Activated CD4-positive, alpha-beta T cell treated with anti-CD3 and anti-CD28 coated beads, Interleukin-2, amount 10 ng/mL, durations not matched to agents 24 days and 14 days (primary cell): ENCODE measurements at regions of chr2 and their contacts with region 1.

Region 1: GRCh38 chr2:205680067-205680466 is 2.2 kb upstream of the NRP2 start:
- DNase-seq: peak; percentile 88
- H3K4me3 Mint-ChIP-seq: no peak overlapping the region
- H3K27ac Mint-ChIP-seq: peak overlapping the region; percentile 14
- H3K4me1 Mint-ChIP-seq: peaks cover 48% of the 10 kb centered on the region
- H3K27me3 Mint-ChIP-seq: peaks cover 35% of the 10 kb centered on the region

Region 2: GRCh38 chr2:204325468-204325867 is 1354.6 kb before region 1 on chr2:
- intact Hi-C with region 1: loop called (anchors 2 kb)
- DNase-seq: peak; percentile 90
- H3K4me3 Mint-ChIP-seq: no peak overlapping the region
- H3K27ac Mint-ChIP-seq: no peak overlapping the region
- H3K4me1 Mint-ChIP-seq: peaks cover 5% of the 10 kb centered on the region
- H3K27me3 Mint-ChIP-seq: peaks cover 6% of the 10 kb centered on the region

Region 3: GRCh38 chr2:204871231-204871953 is 808.7 kb before region 1 on chr2:
- intact Hi-C with region 1: loop called (anchors 1 kb)
- DNase-seq: peak; percentile 66
- H3K4me3 Mint-ChIP-seq: no peak overlapping the region
- H3K27ac Mint-ChIP-seq: no peak overlapping the region
- H3K4me1 Mint-ChIP-seq: peaks cover 21% of the 10 kb centered on the region
- H3K27me3 Mint-ChIP-seq: peaks cover 15% of the 10 kb centered on the region

Region 4: GRCh38 chr2:204972606-204973336 is 707.3 kb before region 1 on chr2:
- intact Hi-C with region 1: loop called (anchors 10 kb)
- DNase-seq: no peak
- H3K4me3 Mint-ChIP-seq: no peak overlapping the region
- H3K27ac Mint-ChIP-seq: peak overlapping the region; percentile 62
- H3K4me1 Mint-ChIP-seq: peaks cover 34% of the 10 kb centered on the region
- H3K27me3 Mint-ChIP-seq: no peaks in the 10 kb centered on the region

Region 5: GRCh38 chr2:205474741-205475415 is 205.2 kb before region 1 on chr2:
- intact Hi-C with region 1: loop called (anchors 10 kb)
- DNase-seq: no peak
- H3K4me3 Mint-ChIP-seq: no peak overlapping the region
- H3K27ac Mint-ChIP-seq: no peak overlapping the region
- H3K4me1 Mint-ChIP-seq: peaks cover 3% of the 10 kb centered on the region
- H3K27me3 Mint-ChIP-seq: peaks cover 43% of the 10 kb centered on the region

Region 6: DNA sequence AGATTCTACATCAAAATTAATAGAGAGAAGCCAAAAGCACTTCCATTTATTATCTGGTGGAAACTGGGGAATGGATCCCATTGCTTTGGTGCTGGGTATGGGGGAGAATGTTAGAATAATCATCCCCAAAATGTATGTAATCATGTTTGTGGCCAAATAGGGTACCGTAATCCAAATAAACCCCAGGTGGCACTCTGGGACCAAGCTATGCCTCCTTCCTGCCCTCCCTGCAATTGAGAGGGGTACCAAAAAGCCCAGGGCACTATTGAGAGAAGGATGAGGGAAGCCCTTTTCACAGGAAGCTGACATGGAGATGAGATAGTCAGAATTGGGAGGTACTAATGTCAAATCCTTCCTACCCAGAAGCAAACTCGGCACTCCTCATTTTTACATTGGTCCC is 83.5 kb before region 1 on chr2:
- intact Hi-C with region 1: loop called (anchors 1 kb)
- DNase-seq: no peak
- H3K4me3 Mint-ChIP-seq: no peak overlapping the region
- H3K27ac Mint-ChIP-seq: no peak overlapping the region
- H3K4me1 Mint-ChIP-seq: no peaks in the 10 kb centered on the region
- H3K27me3 Mint-ChIP-seq: peaks cover 15% of the 10 kb centered on the region

Region 7: DNA sequence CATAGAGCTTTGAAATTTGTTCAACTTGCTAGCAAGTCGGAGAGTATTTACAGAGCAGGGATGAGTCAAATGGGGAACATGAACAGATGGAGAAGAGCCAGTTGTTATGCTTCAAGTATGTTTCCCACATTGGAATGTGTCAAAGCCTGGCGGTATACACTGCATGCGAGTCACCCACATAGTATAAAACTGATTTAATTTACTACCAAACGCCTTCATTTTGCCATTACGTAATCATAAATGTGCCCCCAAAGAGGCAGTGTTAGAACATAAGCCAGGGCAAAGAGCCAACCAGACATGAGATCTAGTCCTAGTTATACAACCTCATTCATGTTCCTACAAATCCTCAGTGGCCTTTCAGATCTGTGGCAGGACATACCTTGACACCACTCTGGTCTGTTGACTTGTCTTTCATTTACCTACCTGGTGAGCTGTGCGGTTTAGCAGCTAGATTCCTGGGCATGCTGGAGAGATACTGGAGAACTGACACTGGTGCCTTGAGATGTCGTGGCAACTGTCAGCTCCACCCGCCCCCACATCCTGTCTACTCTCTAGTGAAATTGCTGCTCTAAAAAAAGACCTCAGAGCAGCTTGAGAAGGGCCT is 19.4 kb before region 1 on chr2:
- intact Hi-C with region 1: loop called (anchors 2 kb)
- DNase-seq: peak; percentile 84
- H3K4me3 Mint-ChIP-seq: peak overlapping the region; percentile 50
- H3K27ac Mint-ChIP-seq: peak overlapping the region; percentile 73
- H3K4me1 Mint-ChIP-seq: peaks cover 28% of the 10 kb centered on the region
- H3K27me3 Mint-ChIP-seq: peaks cover 4% of the 10 kb centered on the region

Region 8: GRCh38 chr2:205925373-205926337 is 245.6 kb after region 1 on chr2:
- intact Hi-C with region 1: no loop called
- DNase-seq: peak; percentile 90
- H3K4me3 Mint-ChIP-seq: peak overlapping the region; percentile 47
- H3K27ac Mint-ChIP-seq: no peak overlapping the region
- H3K4me1 Mint-ChIP-seq: peaks cover 9% of the 10 kb centered on the region
- H3K27me3 Mint-ChIP-seq: peaks cover 38% of the 10 kb centered on the region